Testis (tissue), 5 donors: ENCODE measurements at regions of chr17 and their contacts with region 1.

Region 1: DNA sequence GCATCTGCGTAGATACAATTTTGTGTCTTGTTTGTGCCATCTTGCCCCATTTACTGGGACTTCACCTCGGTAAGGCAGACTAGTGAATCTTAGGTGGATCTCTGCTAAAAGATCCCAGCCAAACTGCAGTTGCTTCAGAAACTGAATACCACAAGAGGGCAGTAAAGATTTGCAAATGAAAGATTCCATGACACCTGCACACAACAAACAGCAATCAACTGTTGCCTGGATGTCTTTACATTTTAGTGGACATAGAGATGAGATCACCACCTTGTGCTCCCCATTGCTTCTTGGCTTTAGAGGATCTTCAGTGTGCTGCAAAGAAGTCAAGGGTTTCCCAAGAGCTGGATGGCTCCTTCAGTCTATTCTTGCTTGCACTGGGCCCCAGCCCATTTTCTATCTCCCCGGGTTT is 119.2 kb upstream of the CACNG5 start:
- DNase-seq: no peak
- H3K4me3 ChIP-seq: no peak overlapping the region
- H3K27ac ChIP-seq: peak overlapping the region in 1 of 2 donors; percentile 31
- H3K4me1 ChIP-seq: peaks cover 4% of the 10 kb centered on the region
- H3K27me3 ChIP-seq: no peaks in the 10 kb centered on the region
- CTCF ChIP-seq: peak; percentile 59 to 79 (median 72)
- POLR2A ChIP-seq: no peak

Region 2: GRCh38 chr17:66764559-66764958 is 48.8 kb after region 1 on chr17:
- intact Hi-C with region 1: no loop called
- DNase-seq: no peak
- H3K4me3 ChIP-seq: no peak overlapping the region
- H3K27ac ChIP-seq: no peak overlapping the region
- H3K4me1 ChIP-seq: no peaks in the 10 kb centered on the region
- H3K27me3 ChIP-seq: no peaks in the 10 kb centered on the region
- CTCF ChIP-seq: no peak
- POLR2A ChIP-seq: no peak

Region 3: GRCh38 chr17:66915204-66916096 is 199.7 kb after region 1 on chr17:
- intact Hi-C with region 1: loop called (anchors 10 kb)
- DNase-seq: peak; percentile 52
- H3K4me3 ChIP-seq: no peak overlapping the region
- H3K27ac ChIP-seq: no peak overlapping the region
- H3K4me1 ChIP-seq: no peaks in the 10 kb centered on the region
- H3K27me3 ChIP-seq: no peaks in the 10 kb centered on the region
- CTCF ChIP-seq: no peak
- POLR2A ChIP-seq: no peak

Region 4: DNA sequence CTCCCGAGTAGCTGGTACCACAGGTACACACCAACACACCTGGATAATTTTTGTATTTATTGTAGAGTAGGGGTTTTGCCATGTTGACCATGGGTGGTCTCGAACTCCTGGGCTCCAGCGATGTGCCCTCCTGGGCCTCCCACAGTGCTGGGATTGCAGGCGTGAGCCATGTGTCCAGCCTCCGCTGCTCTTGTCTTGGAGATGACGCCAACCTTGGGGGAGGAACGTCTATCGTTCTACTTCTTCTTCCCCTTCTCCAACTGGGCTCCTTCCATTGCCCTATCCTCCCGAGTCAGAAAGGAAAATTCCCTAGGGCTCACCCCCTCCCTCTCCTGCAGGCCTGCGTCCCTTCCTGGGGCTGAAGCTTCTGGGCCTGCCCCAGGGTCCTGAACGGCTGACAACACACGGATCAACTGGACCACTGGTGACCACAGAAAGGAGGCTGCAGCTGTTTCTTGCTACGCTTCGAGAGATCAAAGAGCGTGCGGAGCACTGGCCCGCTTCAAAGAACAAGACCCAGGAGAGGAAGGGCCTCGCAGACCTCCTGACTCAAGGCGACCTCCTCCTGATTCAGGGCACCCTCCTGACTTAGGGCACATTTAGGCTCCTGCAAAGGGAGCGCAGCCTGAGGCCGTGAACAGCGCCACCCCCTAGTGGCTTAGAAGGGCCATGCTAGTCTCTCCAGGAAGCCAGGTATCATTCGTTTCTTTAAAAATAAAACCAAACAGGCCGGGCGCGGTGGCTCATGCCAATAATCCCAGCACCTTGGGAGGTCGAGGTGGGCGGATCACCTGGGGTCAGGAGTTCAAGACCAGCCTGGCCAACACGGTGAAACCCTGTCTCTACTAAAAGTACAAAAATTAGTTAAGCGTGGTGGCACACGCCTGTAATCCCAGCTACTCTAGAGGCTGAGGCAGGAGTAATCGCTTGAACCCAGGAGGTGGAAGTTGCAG is 577.8 kb after region 1 on chr17:
- intact Hi-C with region 1: loop called (anchors 10 kb)
- DNase-seq: peak; percentile 81
- H3K4me3 ChIP-seq: no peak overlapping the region
- H3K27ac ChIP-seq: no peak overlapping the region
- H3K4me1 ChIP-seq: peaks cover 27% of the 10 kb centered on the region
- H3K27me3 ChIP-seq: no peaks in the 10 kb centered on the region
- CTCF ChIP-seq: peak; percentile 47 to 79 (median 70)
- POLR2A ChIP-seq: no peak